AG04450 (cell line): ENCODE measurements at regions of chr12 and their contacts with region 1.

Region 1: DNA sequence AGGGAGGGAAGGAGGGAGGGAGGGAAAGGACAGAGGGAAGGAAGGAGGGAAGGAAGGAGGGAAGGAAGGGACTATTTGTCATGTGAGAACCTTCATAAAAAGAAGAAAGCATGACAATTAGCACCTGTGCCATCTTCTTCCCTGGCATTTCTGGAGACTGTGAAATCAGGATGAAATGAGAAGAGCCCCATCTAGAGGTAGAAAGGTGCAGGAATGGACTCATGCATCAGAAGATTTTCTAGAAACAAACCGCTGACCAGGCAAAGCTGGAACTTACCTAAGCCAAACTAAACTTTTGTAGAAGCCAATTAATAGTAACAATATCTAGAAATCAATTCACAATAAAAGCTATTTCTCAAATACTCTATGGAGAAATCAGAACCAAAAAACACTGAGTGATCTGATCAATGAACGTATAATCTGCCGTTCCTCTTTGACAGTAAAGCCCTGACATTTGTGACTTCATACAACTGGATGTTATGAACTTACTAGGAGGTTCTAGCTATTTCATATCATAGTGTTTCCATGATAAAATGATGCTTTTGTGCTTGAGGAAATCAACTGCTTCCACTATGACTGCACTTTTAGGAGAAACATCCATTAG is 24.4 kb upstream of the CRACR2A start:
- DNase-seq: peak; percentile 10
- H3K4me3 ChIP-seq: no peak overlapping the region
- H3K27ac ChIP-seq: no peak overlapping the region
- H3K27me3 ChIP-seq: peaks cover 5% of the 10 kb centered on the region
- CTCF ChIP-seq: peak; percentile 87

Region 2: GRCh38 chr12:3328571-3328970 is 448.7 kb before region 1 on chr12:
- CTCF ChIA-PET with region 1: no interaction called
- POLR2A ChIA-PET with region 1: no interaction called
- DNase-seq: no peak
- H3K4me3 ChIP-seq: no peak overlapping the region
- H3K27ac ChIP-seq: no peak overlapping the region
- H3K27me3 ChIP-seq: peaks cover 34% of the 10 kb centered on the region
- CTCF ChIP-seq: no peak

Region 3: GRCh38 chr12:3655328-3655900 is 121.9 kb before region 1 on chr12:
- CTCF ChIA-PET with region 1: interaction called, 14 read pairs
- POLR2A ChIA-PET with region 1: no interaction called
- DNase-seq: no peak
- H3K4me3 ChIP-seq: no peak overlapping the region
- H3K27ac ChIP-seq: no peak overlapping the region
- H3K27me3 ChIP-seq: peaks cover 5% of the 10 kb centered on the region
- CTCF ChIP-seq: peak; percentile 38

Region 4: DNA sequence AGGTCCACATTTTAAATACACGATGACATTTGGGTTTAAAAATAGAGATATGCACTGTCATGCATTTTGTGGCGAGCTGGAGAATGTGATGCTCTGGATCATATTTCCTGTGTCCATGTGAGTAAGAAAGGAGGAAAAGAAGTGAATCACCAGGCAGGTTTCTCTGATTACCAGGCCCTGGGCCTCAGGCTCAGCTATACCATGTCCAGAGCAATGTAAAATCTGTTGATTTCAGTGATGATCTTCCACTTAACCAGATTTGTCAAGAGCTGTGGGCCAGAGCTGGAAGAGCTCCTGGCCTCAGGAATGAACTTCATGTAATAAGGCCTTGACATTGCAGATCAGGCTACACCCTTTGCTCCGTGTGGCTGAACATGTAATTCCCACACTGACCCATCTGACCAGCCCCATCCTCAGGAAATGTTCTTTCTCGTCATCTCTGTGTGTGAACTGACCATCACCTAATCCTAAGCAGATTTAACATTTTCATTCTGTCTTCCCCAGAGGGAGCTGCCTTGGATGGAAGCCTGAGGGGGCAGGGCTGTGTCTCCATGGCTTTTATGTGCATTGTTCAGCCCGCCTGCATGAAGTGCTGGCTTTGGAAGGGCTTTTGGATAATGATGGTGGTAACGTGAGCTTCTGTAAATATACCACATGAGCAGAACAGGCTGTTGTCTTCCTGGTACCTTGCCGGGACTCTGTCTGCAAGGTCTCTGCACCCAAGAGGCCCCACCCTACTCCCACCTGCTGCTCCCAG is 78.9 kb before region 1 on chr12:
- CTCF ChIA-PET with region 1: interaction called, 10 read pairs
- POLR2A ChIA-PET with region 1: no interaction called
- DNase-seq: peak; percentile 82
- H3K4me3 ChIP-seq: no peak overlapping the region
- H3K27ac ChIP-seq: peak overlapping the region; percentile 98
- H3K27me3 ChIP-seq: no peaks in the 10 kb centered on the region
- CTCF ChIP-seq: no peak